WTC11 (cell line): ENCODE measurements at regions of chr22 and their contacts with region 1.

Region 1: GRCh38 chr22:22616636-22617035 is 27.8 kb upstream of the GGTLC2 start:
- DNase-seq: no peak
- ATAC-seq: no peak
- H3K4me3 Mint-ChIP-seq: no peak overlapping the region
- H3K27ac Mint-ChIP-seq: no peak overlapping the region
- H3K4me1 Mint-ChIP-seq: peaks cover 6% of the 10 kb centered on the region
- H3K27me3 Mint-ChIP-seq: peaks cover 97% of the 10 kb centered on the region
- CTCF ChIP-seq: no peak

Region 2: DNA sequence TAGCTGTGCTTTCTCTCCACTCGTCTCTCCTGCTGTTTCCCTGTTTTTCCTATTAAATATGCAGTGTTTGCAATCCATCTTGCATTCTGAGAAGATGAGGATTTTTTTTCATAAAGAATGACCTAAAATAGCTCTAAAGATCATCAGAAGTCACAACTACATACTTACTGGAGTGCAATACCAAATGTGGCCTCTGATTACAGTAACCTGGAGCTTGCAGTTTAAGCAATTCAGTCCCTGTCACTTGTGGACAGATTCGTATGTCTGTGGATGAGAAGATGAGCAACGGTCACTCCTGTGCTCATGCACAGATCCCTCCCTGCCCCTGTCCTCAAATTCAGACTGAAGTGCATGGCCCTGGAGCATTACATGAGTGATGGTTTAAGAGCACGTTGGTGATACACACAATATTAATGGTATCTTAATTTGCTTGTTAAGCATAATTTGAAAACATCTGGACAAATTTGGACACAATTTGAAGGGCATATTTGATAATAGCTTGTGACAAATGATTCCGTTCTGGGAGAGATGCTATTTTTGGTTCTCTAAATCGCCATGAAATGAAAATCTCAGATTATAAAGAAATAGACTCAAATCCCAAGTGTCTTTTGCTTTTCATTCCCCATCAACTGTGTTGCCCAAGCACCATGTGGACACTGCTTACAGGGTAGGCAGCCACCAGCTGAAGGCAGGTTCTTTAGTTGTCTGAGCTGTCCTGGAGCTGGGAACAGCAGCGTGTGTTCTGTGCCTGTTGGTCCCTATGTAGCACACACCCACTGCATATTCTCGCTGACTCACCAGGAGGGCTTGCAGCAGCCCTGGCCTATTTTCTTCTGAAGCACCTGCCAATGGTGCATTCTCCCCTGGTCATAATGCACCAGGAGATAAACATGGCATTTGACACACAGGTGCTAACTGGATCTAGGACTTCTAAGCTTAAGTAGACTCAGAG is 25.0 kb before region 1 on chr22:
- CTCF ChIA-PET with region 1: interaction called, 23 read pairs
- POLR2A ChIA-PET with region 1: no interaction called
- DNase-seq: no peak
- ATAC-seq: no peak
- H3K4me3 Mint-ChIP-seq: no peak overlapping the region
- H3K27ac Mint-ChIP-seq: no peak overlapping the region
- H3K4me1 Mint-ChIP-seq: no peaks in the 10 kb centered on the region; the same call in 1 of the 2 replicates
- H3K27me3 Mint-ChIP-seq: peaks cover 93% of the 10 kb centered on the region
- CTCF ChIP-seq: no peak

Region 3: GRCh38 chr22:22598144-22598543 is 18.5 kb before region 1 on chr22:
- CTCF ChIA-PET with region 1: interaction called, 16 read pairs
- POLR2A ChIA-PET with region 1: no interaction called
- DNase-seq: no peak
- ATAC-seq: peak; percentile 38; the same call in 1 of the 2 replicates
- H3K4me3 Mint-ChIP-seq: no peak overlapping the region
- H3K27ac Mint-ChIP-seq: no peak overlapping the region
- H3K4me1 Mint-ChIP-seq: peaks cover 17% of the 10 kb centered on the region
- H3K27me3 Mint-ChIP-seq: peaks cover 95% of the 10 kb centered on the region
- CTCF ChIP-seq: no peak

Region 4: GRCh38 chr22:22605074-22605404 is 11.6 kb before region 1 on chr22:
- CTCF ChIA-PET with region 1: interaction called, 15 read pairs
- POLR2A ChIA-PET with region 1: no interaction called
- DNase-seq: no peak
- ATAC-seq: no peak
- H3K4me3 Mint-ChIP-seq: no peak overlapping the region
- H3K27ac Mint-ChIP-seq: no peak overlapping the region
- H3K4me1 Mint-ChIP-seq: peaks cover 14% of the 10 kb centered on the region
- H3K27me3 Mint-ChIP-seq: peaks cover 94% of the 10 kb centered on the region
- CTCF ChIP-seq: no peak

Region 5: DNA sequence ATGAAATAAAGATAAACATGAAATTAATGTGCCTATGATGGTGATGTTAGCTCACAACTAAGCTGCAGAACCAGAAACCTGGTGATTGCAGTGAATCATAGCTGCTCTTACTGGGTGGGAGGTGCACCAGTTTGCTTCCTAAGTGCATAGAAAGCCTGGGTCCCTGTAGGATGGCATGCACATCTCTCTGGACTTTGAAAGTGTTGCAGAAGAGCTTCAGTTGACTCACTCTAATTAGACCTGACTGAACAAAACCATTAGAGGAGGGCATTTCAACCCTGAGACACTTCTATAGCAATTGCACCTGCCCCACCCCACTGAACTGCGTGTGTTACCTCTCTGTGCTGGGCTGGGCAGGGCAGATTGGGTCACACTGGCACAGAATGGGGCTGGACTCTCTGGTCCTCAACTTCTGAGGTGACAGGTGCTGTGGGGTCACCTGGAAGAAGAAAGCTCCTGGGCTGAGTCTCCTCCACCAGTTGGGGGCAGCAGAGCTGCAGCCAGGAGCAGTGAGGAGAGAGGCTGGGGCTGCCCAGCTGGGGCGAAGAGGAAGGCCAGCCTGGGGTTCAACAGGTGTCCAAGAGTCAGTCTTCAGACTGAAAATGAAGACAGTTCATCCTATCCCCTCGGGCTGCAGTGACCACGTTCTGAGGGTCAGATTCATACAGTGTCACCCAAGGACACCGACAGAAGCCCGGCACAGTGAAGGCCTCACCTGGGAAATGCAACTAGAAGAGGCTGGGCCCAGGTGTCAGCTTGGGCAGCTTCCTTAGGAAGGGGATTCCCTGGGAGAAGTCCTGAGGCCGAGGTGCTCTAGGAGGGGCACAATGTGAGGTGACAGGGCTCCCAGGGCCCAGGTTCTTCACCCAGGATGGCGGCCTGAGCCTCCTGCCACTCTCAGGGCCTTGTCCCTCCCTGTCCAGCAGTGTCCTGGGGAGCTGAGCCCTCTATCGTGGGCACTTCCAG is 85.9 kb after region 1 on chr22:
- CTCF ChIA-PET with region 1: interaction called, 13 read pairs
- POLR2A ChIA-PET with region 1: no interaction called
- DNase-seq: peak; percentile 61
- ATAC-seq: peak; percentile 86
- H3K4me3 Mint-ChIP-seq: no peak overlapping the region
- H3K27ac Mint-ChIP-seq: no peak overlapping the region
- H3K4me1 Mint-ChIP-seq: no peaks in the 10 kb centered on the region
- H3K27me3 Mint-ChIP-seq: peaks cover 99% of the 10 kb centered on the region
- CTCF ChIP-seq: peak; percentile 52; the same call in 1 of the 2 replicates

Region 6: GRCh38 chr22:22836635-22837034 is 220.0 kb after region 1 on chr22:
- CTCF ChIA-PET with region 1: no interaction called
- POLR2A ChIA-PET with region 1: no interaction called
- DNase-seq: no peak
- ATAC-seq: no peak
- H3K4me3 Mint-ChIP-seq: no peak overlapping the region
- H3K27ac Mint-ChIP-seq: no peak overlapping the region
- H3K4me1 Mint-ChIP-seq: no peaks in the 10 kb centered on the region
- H3K27me3 Mint-ChIP-seq: peaks cover 93% of the 10 kb centered on the region
- CTCF ChIP-seq: no peak